ENCODE measurements at regions of chr12 and their contacts with region 1.

Region 1: DNA sequence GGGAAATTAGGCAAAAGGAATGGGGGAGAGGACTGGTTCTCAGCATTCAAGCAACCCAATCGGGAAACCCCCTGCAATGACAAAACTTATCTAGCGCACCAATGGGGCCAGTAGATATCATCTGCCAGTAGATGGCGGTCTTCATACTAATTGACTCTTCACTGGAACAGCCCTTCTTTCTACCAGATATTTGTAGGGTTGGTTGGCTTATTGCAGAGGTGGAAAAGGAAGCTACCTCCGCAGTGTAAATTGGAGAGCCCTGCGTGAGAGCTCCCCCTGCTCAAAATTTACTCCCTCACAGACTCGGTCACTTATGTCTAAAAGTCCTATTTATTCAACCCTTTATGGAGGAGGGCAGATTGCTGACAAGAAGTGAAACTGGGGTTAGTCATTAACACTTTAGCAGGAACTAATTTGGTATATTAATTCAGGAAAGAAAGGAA is 166.1 kb upstream of the CCND2 start:
- DNase-seq: peak; percentile 77
- H3K4me3 Mint-ChIP-seq: no peak overlapping the region
- H3K27ac Mint-ChIP-seq: peak overlapping the region; percentile 81
- H3K4me1 Mint-ChIP-seq: peaks cover 56% of the 10 kb centered on the region
- H3K27me3 Mint-ChIP-seq: peaks cover 2% of the 10 kb centered on the region

Region 2: GRCh38 chr12:3885277-3886094 is 222.0 kb before region 1 on chr12:
- CTCF ChIA-PET with region 1: interaction called, 19 read pairs
- POLR2A ChIA-PET with region 1: no interaction called
- DNase-seq: peak; percentile 45
- H3K4me3 Mint-ChIP-seq: no peak overlapping the region
- H3K27ac Mint-ChIP-seq: no peak overlapping the region
- H3K4me1 Mint-ChIP-seq: peaks cover 10% of the 10 kb centered on the region
- H3K27me3 Mint-ChIP-seq: peaks cover 9% of the 10 kb centered on the region

Region 3: DNA sequence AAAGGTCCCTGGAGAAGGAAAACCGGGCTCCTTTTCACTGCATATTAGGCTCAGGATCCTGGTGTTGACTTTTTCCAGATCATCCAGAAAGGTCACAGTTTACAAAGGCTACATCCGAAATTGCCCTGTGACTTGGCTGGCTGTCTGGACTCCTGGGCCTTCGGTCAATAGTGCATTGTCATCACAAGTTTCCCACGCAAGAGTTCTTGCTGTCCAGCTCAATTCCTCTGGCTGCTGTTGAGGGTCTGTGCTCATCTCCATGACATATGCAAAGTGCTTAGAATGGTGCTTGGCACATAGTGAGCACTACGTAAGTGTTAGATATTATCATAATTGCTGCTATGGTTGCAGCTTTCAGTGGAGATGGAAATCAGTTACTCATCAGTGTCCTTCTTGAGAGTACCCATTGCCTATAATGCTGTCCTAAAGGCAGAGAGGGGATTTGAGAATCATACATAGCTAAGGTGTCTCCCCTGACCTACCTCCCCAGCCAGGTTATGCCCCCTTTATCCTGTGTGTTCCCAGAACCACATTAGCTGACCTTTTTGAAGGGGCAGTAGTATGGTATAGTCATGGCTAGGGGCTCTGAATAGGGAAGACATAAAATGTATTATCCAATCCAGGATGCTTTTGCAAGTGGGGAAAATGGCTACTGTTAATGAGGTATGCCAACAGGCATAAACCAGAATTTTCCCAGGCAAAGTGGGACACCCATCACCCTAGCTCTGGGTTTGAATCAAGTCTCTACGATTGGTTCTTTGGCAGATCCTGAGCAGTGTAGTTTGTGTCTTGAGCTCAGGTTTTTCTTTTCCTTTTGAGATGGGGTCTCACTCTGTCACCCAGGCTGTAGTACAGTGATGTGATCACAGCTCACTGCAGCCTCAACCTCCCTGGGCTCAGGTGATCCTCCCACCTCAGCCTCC is 34.2 kb after region 1 on chr12:
- CTCF ChIA-PET with region 1: interaction called, 78 read pairs
- POLR2A ChIA-PET with region 1: interaction called, 23 read pairs
- DNase-seq: no peak
- H3K4me3 Mint-ChIP-seq: peak overlapping the region; percentile 76
- H3K27ac Mint-ChIP-seq: peak overlapping the region; percentile 97
- H3K4me1 Mint-ChIP-seq: peaks cover 85% of the 10 kb centered on the region
- H3K27me3 Mint-ChIP-seq: no peaks in the 10 kb centered on the region

Region 4: DNA sequence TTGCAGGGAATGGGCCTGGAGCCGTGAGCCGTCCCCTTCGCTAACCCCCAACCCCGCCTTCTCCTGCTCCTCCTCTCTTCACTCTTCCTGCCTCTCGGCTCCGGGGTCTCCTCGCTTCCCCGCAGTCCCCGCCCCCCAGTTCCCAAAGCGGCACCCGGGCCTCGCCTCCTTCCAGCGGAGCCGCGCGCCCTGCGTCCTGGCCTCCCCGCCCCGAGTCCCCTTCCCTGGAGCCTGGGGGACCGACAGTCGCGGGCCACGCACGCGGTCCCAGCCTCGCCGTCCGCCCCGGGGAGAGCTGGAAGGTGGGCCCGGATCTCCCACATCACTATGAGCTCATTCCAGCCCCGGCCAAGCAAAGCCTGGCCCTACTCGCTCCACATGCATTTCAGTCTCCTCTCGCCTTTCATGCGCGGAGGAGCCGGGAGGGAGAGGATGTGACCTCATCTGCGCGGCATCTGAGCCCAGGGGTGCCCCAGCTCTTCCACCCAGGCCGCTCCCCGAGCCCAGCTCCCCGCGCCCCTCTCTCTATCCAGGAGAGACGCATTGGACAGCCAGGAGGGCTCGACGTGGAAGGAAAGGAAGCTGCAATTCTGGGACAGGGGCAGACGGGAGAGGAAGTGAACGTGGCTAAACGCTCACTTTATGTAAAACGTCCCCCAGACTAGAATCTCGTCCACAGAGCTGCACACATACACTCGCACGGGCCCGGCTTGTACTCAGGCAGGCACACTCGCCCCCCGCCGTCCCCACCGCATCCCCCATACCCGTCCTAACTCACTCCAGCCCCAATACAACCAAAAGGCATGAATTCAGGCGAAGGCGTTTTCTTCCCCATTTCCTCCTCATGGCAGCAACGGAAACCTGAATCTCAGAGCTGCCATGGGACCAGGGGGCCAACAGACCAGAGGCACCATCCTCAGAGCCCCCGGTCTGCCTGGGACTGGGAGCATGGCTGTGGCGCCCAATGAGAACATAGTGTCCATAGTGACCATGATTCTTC is 57.4 kb after region 1 on chr12:
- CTCF ChIA-PET with region 1: interaction called, 12 read pairs
- POLR2A ChIA-PET with region 1: interaction called, 8 read pairs
- DNase-seq: peak; percentile 71
- H3K4me3 Mint-ChIP-seq: peak overlapping the region; percentile 72
- H3K27ac Mint-ChIP-seq: peak overlapping the region; percentile 84
- H3K4me1 Mint-ChIP-seq: peaks cover 64% of the 10 kb centered on the region
- H3K27me3 Mint-ChIP-seq: no peaks in the 10 kb centered on the region

Region 5: DNA sequence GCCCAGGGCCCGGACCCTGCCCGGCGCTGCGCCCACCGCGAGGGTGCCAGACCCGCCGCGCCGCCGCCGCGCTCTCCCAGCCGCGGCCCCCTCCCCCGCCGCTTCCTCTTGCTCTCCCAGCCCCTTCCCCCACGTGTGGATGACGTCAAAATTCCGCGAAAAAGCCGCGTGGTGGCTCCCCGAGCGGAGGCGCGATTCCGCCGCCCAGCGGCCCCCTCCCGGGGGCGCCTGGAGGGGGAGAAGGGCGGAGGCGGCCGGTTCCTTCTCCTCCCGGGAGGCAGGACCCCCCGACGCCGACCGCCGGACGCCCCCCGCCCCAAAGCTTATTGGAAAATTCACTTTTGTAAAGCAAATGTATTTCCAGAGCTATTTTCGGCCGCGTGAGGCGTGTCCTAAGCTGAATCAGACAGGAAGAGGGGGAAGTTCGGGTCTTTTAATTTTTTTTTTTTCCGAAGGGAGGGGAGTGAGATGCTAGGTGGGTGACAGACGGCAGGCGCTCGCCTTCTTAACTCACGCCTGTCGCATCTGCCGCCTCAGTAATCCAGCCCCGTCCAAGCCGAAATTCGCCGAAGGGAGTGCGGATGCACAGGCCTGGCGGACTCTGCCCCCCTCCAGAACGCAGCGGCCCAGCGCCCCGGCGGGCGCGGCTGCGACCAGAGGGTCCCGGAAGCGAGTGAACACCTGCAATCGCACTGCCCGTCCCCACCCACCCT is 162.0 kb after region 1 on chr12:
- CTCF ChIA-PET with region 1: interaction called, 162 read pairs
- POLR2A ChIA-PET with region 1: interaction called, 170 read pairs
- DNase-seq: peak; percentile 93
- H3K4me3 Mint-ChIP-seq: peak overlapping the region; percentile 97
- H3K27ac Mint-ChIP-seq: peak overlapping the region; percentile 99
- H3K4me1 Mint-ChIP-seq: peaks cover 24% of the 10 kb centered on the region
- H3K27me3 Mint-ChIP-seq: peaks cover 26% of the 10 kb centered on the region

Region 6: DNA sequence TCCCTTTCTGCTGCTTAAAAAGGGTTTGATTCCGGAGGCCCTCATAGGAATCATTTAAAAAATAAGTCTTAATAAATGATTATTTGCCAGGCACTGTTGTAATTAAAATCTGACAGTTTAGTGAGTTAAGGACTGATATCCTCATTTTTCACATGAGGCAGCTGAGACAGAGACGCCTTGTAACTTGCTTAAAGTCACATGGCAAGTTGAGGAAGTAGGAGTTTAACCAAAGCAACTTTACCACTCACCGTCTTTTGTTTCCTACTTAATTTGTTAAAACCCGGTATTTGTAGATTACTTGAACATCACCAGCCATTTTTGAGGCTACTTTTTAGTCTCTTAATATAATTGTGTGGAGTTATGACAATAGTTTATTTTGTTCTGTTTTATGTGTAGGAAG is 215.9 kb after region 1 on chr12:
- CTCF ChIA-PET with region 1: no interaction called
- POLR2A ChIA-PET with region 1: no interaction called
- DNase-seq: no peak
- H3K4me3 Mint-ChIP-seq: peak overlapping the region; percentile 17
- H3K27ac Mint-ChIP-seq: no peak overlapping the region
- H3K4me1 Mint-ChIP-seq: peaks cover 46% of the 10 kb centered on the region
- H3K27me3 Mint-ChIP-seq: no peaks in the 10 kb centered on the region